Caco-2 (cell line): ENCODE measurements at regions of chr2 and their contacts with region 1.

Region 1: GRCh38 chr2:124911560-124911959 is 886.5 kb downstream of the CNTNAP5 start:
- DNase-seq: no peak
- H3K4me3 ChIP-seq: no peak overlapping the region
- H3K4me3 Mint-ChIP-seq: no peak overlapping the region
- H3K27ac Mint-ChIP-seq: no peak overlapping the region
- H3K4me1 ChIP-seq: no peaks in the 10 kb centered on the region
- H3K4me1 Mint-ChIP-seq: no peaks in the 10 kb centered on the region
- H3K27me3 ChIP-seq: no peaks in the 10 kb centered on the region
- H3K27me3 Mint-ChIP-seq: peaks cover 9% of the 10 kb centered on the region
- CTCF ChIP-seq: no peak

Region 2: DNA sequence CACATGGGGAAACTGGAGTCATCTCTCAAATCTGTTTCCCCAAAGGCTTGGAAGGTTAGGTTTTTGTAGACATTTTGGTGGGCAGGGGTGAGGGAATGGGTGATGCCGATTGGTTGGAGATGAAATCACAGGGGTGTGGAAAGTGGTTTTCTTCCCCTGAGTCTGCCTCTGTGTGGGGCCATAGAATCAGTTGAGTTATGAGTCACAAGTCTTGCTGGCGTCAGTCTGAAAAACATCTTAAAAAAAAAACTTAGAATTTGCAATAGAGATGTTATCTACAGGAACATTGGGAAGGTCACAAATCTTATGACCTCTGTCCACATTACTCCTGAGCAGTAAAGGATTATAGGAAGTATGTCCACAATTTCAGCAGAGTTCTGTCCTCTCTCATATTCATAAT is 571.9 kb before region 1 on chr2:
- CTCF ChIA-PET with region 1: no interaction called
- POLR2A ChIA-PET with region 1: no interaction called
- intact Hi-C with region 1: no loop called
- DNase-seq: no peak
- H3K4me3 ChIP-seq: no peak overlapping the region
- H3K4me3 Mint-ChIP-seq: no peak overlapping the region
- H3K27ac Mint-ChIP-seq: no peak overlapping the region
- H3K4me1 ChIP-seq: no peaks in the 10 kb centered on the region
- H3K4me1 Mint-ChIP-seq: no peaks in the 10 kb centered on the region
- H3K27me3 ChIP-seq: no peaks in the 10 kb centered on the region
- H3K27me3 Mint-ChIP-seq: peaks cover 2% of the 10 kb centered on the region
- CTCF ChIP-seq: no peak

Region 3: DNA sequence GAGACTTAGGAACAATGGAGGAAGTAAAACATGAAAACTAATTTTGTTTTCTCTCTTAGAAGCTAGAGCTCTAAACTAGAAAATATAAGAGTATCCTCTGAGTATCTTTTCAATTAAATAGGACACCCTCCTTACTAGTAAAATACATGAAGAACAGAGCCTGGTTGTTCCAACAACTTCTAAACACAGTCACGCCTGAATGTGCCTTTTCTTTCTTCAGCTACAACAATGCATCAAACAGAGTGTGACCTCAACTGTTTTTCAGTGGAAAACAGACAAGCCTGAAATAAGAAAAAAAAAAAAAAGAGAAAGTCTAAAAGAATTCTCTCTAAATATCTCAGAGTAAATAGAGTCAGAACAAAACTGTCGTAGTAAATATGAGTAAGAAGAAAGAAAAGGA is 42.4 kb after region 1 on chr2:
- CTCF ChIA-PET with region 1: no interaction called
- POLR2A ChIA-PET with region 1: no interaction called
- intact Hi-C with region 1: no loop called
- DNase-seq: no peak
- H3K4me3 ChIP-seq: no peak overlapping the region
- H3K4me3 Mint-ChIP-seq: no peak overlapping the region
- H3K27ac Mint-ChIP-seq: no peak overlapping the region
- H3K4me1 ChIP-seq: no peaks in the 10 kb centered on the region
- H3K4me1 Mint-ChIP-seq: no peaks in the 10 kb centered on the region
- H3K27me3 ChIP-seq: no peaks in the 10 kb centered on the region
- H3K27me3 Mint-ChIP-seq: peaks cover 9% of the 10 kb centered on the region
- CTCF ChIP-seq: no peak

Region 4: DNA sequence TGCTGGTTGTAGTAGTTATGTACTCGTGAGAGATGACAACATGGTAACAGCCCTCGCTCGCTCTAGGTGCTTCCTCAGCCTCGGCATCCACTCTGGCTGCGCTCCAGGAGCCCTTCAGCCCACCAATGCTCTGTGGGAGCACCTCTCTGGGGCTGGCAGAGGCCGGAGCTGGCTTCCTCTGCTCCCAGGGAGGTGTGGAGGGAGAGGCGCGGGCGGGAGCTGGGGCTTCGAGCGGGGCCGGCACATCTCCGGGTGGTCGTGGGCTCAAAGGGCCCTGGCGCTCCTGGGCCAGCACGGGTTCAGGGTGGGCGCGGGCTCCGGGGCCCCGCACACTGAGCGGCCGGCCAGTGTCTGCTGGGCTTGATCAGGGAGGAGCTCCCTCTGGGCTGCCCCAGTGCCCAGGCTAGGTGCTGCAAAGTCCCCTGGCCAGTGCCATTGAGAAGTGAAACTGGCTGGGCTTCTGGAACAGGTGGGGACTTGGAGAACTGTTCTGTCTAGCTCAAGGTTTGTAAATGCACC is 125.6 kb after region 1 on chr2:
- CTCF ChIA-PET with region 1: no interaction called
- POLR2A ChIA-PET with region 1: no interaction called
- intact Hi-C with region 1: loop called (anchors 5 kb)
- DNase-seq: no peak
- H3K4me3 ChIP-seq: no peak overlapping the region
- H3K4me3 Mint-ChIP-seq: no peak overlapping the region
- H3K27ac Mint-ChIP-seq: no peak overlapping the region
- H3K4me1 ChIP-seq: no peaks in the 10 kb centered on the region
- H3K4me1 Mint-ChIP-seq: no peaks in the 10 kb centered on the region
- H3K27me3 ChIP-seq: no peaks in the 10 kb centered on the region
- H3K27me3 Mint-ChIP-seq: peaks cover 7% of the 10 kb centered on the region
- CTCF ChIP-seq: no peak

Region 5: DNA sequence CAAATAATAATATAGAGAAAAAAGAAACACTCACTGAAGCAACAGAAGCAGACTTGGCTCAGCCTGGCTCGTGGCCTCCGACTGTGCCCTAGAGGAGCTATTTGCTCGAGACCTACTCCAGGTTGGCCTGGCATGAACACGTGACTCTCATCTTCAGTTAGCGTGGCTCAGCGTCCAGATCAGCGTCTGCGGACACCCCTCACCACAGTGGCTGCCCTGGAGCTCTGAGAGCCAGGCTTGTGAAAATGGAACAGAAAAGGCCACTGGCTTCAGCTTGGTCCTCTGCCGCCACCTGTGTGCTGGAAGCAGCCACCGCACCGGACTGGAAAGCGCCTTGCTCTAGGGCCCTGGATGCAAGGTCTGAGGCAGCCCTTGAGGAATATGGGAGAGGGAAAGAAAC is 560.4 kb after region 1 on chr2:
- CTCF ChIA-PET with region 1: interaction called, 6 read pairs
- POLR2A ChIA-PET with region 1: no interaction called
- intact Hi-C with region 1: loop called (anchors 2 kb)
- DNase-seq: peak; percentile 34 to 54
- H3K4me3 ChIP-seq: no peak overlapping the region
- H3K4me3 Mint-ChIP-seq: no peak overlapping the region
- H3K27ac Mint-ChIP-seq: no peak overlapping the region
- H3K4me1 ChIP-seq: no peaks in the 10 kb centered on the region
- H3K4me1 Mint-ChIP-seq: no peaks in the 10 kb centered on the region
- H3K27me3 ChIP-seq: no peaks in the 10 kb centered on the region
- H3K27me3 Mint-ChIP-seq: peaks cover 6% of the 10 kb centered on the region
- CTCF ChIP-seq: peak; percentile 43 to 49